Pancreas (tissue), 10 donors: ENCODE measurements at regions of chr4 and their contacts with region 1.

Region 1: DNA sequence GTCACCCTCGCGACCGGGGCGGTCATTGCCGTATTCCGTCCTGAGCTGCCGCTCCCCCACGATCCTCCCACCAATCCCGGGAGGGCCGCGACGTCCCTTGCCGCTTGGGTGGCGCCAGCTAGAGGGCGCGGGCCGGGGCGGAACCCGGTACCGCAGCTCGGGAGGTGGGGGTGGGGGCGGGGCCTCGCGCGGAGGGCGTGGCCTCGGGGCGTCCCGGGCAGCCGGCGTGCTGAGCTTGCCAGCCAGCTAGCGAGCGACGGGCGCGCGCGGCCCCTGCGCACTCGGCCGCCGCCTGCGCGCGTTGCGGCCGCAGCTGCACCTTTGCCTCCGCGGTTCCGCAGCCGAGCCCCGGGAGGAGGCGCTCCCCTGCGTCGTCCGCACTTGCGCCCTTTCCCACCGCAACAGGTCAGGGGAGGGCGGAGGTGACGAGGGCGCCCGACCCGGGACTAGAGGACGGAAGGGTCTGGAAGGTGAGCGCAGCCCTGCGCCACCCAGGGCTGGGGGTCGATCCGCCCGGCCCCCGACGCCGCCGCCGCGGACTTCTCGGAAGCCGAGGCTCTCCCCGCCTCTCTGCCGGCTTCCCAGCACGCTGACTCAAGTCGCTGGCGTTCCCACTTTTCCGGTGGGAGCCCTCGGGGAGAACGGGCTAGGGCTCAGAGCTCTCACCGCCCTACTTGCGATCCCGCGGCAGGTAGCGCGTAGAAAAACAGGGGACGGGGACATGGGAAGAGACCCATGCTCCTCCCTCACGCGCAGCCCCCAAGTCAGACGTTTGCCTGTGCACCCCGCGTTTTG is at the start of gene AFF1:
- DNase-seq: peak; percentile 93 to 97 (median 96)
- ATAC-seq: peak; percentile 80 to 88 (median 85)
- H3K4me3 ChIP-seq: peak within 1 kb of the TSS; percentile 75 to 96 (median 88)
- H3K27ac ChIP-seq: peak within 1 kb of the TSS; percentile 96 to 99 (median 98)
- H3K4me1 ChIP-seq: peaks cover 26 to 37% (median 34%) of the 10 kb centered on the region in 3 donors
- H3K27me3 ChIP-seq: no peaks in the 10 kb centered on the region
- CTCF ChIP-seq: peak; percentile 15 to 45 (median 36)
- total RNA-seq, gene AFF1: 35.8 to 62.0 (median 40.9) TPM

Region 2: DNA sequence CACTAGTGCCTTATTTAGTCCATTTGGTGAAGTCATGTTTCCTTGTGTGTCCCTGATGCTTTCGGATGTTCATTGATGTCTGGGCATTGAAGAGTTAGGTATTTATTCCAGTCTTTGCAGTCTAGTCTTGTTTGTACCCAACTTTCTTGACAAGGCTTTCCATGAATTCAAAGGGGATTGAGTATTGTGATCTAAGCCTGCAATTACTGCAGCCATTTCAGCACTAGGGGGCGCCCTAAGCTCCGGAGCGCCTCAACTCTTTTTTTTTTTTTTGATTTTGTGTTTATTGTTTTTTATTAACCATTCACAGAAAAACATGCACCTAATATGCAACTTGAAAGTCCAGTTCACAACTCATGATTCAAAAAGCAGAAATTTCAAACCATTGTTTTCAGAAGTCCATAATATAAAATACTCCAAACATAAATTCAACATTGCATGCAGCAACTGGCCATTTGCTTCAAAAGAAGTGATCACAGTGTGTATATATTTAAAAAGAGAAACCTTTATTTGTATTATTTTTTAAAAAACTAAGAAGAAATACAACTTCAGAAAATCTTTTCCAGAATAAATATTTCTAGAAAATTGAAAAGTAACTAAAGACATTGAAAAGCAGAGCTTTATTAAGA is 281.6 kb before region 1 on chr4:
- intact Hi-C with region 1: no loop called
- DNase-seq: no peak
- ATAC-seq: no peak
- H3K4me3 ChIP-seq: no peak overlapping the region
- H3K27ac ChIP-seq: no peak overlapping the region
- H3K4me1 ChIP-seq: no peaks in the 10 kb centered on the region
- H3K27me3 ChIP-seq: no peaks in the 10 kb centered on the region
- CTCF ChIP-seq: no peak

Region 3: DNA sequence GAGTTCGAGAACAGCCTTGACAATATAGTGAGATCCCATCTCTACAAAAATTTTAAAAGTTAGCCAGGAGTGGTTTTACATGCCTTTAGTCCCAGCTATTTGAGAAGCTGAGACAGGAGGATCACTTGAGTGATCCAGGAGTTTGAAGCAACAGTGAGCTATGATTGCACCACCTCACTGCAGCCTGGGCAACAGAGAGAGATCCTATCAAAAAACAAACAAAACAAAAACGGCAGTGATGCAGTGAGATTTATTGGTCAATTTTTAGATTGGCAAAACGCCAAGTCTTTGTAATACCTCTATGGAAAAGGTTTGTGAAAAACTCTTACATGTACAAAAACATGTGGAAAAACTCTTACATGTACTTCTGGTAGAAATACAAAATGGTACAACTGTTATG is 249.6 kb before region 1 on chr4:
- intact Hi-C with region 1: no loop called
- DNase-seq: no peak
- ATAC-seq: no peak
- H3K4me3 ChIP-seq: no peak overlapping the region
- H3K27ac ChIP-seq: no peak overlapping the region
- H3K4me1 ChIP-seq: no peaks in the 10 kb centered on the region
- H3K27me3 ChIP-seq: no peaks in the 10 kb centered on the region
- CTCF ChIP-seq: no peak

Region 4: DNA sequence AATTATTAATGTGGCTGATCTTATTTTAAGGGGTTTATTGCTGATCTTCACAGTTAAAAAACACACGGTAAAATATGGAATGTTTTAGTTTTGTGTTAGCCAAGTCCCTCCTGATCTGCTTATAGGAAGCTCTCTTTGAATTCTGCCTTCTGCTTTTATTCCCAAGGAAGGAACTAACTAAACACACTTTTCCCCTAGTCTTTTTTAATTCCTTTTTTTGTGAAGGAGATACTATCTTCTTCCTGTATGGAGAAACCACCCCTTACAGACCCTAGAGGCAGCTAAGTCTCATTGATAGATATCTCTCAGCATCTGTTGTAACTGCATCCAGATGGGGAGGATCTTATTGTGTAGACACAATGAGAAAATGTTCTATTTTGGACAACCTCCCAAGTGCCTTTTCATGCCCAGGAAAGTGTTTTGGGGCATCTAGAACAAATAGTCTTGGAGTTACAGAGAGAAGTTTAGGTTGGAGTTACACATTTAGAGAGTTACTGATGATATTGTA is 64.2 kb after region 1 on chr4:
- intact Hi-C with region 1: loop called in 2 of 3 experiments (anchors 10 kb)
- DNase-seq: no peak
- ATAC-seq: no peak
- H3K4me3 ChIP-seq: no peak overlapping the region
- H3K27ac ChIP-seq: peak overlapping the region in 1 of 4 donors; percentile 33
- H3K4me1 ChIP-seq: peaks cover 9 to 28% (median 14%) of the 10 kb centered on the region in 3 donors
- H3K27me3 ChIP-seq: no peaks in the 10 kb centered on the region
- CTCF ChIP-seq: no peak

Region 5: GRCh38 chr4:87006676-87007527 is 71.9 kb after region 1 on chr4:
- intact Hi-C with region 1: loop called in 1 of 3 experiments (anchors 5 kb)
- DNase-seq: peak; percentile 92 to 98 (median 94)
- ATAC-seq: peak; percentile 86 to 94 (median 93)
- H3K4me3 ChIP-seq: peak overlapping the region; percentile 46 to 67 (median 60)
- H3K27ac ChIP-seq: peak overlapping the region; percentile 94 to 98 (median 96)
- H3K4me1 ChIP-seq: peaks cover 17 to 52% (median 43%) of the 10 kb centered on the region in 3 donors
- H3K27me3 ChIP-seq: no peaks in the 10 kb centered on the region
- CTCF ChIP-seq: no peak